H1 (cell line): ENCODE measurements at regions of chr13 and their contacts with region 1.

Region 1: GRCh38 chr13:96075953-96076543 is 13.9 kb upstream of the HS6ST3 start:
- DNase-seq: no peak
- H3K4me3 ChIP-seq: no peak overlapping the region
- H3K27ac ChIP-seq: no peak overlapping the region
- H3K4me1 ChIP-seq: no peaks in the 10 kb centered on the region
- H3K27me3 ChIP-seq: no peaks in the 10 kb centered on the region
- CTCF ChIP-seq: peak in 1 of 3 experiments; percentile 53; a peak in 2 of 4 replicates
- EP300 ChIP-seq: no peak
- POLR2A ChIP-seq: no peak
- RAD21 ChIP-seq: peak in 1 of 2 experiments; percentile 14; a peak in 1 of 4 replicates

Region 2: GRCh38 chr13:96065849-96066248 is 10.2 kb before region 1 on chr13:
- CTCF ChIA-PET with region 1: interaction called, 37 read pairs
- POLR2A ChIA-PET with region 1: no interaction called
- DNase-seq: no peak
- H3K4me3 ChIP-seq: no peak overlapping the region
- H3K27ac ChIP-seq: no peak overlapping the region
- H3K4me1 ChIP-seq: peaks cover 0 to 4% (median 0%) of the 10 kb centered on the region in 4 experiments; a peak in 2 of 7 replicates
- H3K27me3 ChIP-seq: no peaks in the 10 kb centered on the region
- CTCF ChIP-seq: no peak
- EP300 ChIP-seq: no peak
- POLR2A ChIP-seq: no peak
- RAD21 ChIP-seq: no peak

Region 3: GRCh38 chr13:96086736-96087135 is 10.7 kb after region 1 on chr13:
- CTCF ChIA-PET with region 1: interaction called, 10 read pairs
- POLR2A ChIA-PET with region 1: interaction called, 5 read pairs
- DNase-seq: no peak
- H3K4me3 ChIP-seq: no peak overlapping the region
- H3K27ac ChIP-seq: no peak overlapping the region
- H3K4me1 ChIP-seq: peaks cover 0 to 3% (median 0%) of the 10 kb centered on the region in 4 experiments; a peak in 2 of 7 replicates
- H3K27me3 ChIP-seq: peaks cover 14 to 26% (median 19%) of the 10 kb centered on the region in 4 experiments
- CTCF ChIP-seq: no peak
- EP300 ChIP-seq: no peak
- POLR2A ChIP-seq: no peak
- RAD21 ChIP-seq: no peak